Adrenal gland (tissue), 19 donors: ENCODE measurements at regions of chr7 and their contacts with region 1.

Region 1: DNA sequence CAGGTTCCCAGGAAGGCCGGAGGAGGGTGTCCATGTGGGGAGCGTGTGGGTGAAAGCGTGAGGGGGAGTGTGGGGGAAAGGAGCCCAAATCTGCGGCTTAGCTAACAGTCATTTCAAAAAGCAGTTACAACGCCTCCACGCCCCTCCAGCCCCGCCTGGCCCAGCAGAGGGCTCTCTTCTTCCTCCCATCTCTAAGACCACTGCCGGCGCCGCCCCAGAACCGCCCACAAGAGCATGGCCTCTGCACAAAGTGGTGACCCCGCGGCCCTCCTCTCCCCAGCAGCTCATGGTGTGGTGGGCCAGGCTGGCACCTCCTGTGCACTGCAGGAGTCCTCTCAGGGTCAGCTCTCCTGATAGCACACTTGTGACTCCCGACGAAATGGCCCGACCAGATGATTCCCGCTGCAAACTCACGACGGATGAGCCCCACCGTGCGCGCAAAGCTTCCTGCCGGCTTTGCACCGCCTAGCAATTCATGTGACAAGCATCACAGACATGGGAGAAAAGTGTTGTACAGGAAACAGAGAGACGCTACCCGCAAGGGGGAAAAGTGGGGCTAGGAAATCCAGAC is 12.4 kb upstream of the HUS1 start:
- DNase-seq: peak; percentile 78 to 91 (median 82)
- H3K4me3 ChIP-seq: peak overlapping the region in 2 of 4 donors; percentile 36 to 74
- H3K27ac ChIP-seq: peak overlapping the region in 2 of 5 donors; percentile 37 to 75
- H3K4me1 ChIP-seq: no peaks in the 10 kb centered on the region
- H3K27me3 ChIP-seq: no peaks in the 10 kb centered on the region
- CTCF ChIP-seq: peak; percentile 37 to 71 (median 58)
- POLR2A ChIP-seq: peak in 1 of 2 donors; percentile 16

Region 2: GRCh38 chr7:47924270-47924669 is 67.6 kb before region 1 on chr7:
- intact Hi-C with region 1: no loop called
- DNase-seq: no peak
- H3K4me3 ChIP-seq: no peak overlapping the region
- H3K27ac ChIP-seq: no peak overlapping the region
- H3K4me1 ChIP-seq: no peaks in the 10 kb centered on the region
- H3K27me3 ChIP-seq: no peaks in the 10 kb centered on the region
- CTCF ChIP-seq: no peak
- POLR2A ChIP-seq: no peak

Region 3: GRCh38 chr7:48089046-48090003 is 97.5 kb after region 1 on chr7 and contains the start of gene UPP1:
- intact Hi-C with region 1: loop called in 1 of 2 experiments (anchors 5 kb)
- DNase-seq: peak in 6 of 7 donors; percentile 52 to 96 (median 96)
- H3K4me3 ChIP-seq: peak within 1 kb of the TSS; percentile 49 to 90 (median 74)
- H3K27ac ChIP-seq: peak within 1 kb of the TSS; percentile 97 to 99 (median 98)
- H3K4me1 ChIP-seq: peaks cover 7 to 53% of the 10 kb centered on the region in 2 donors
- H3K27me3 ChIP-seq: no peaks in the 10 kb centered on the region
- CTCF ChIP-seq: peak in 2 of 6 experiments; percentile 2 to 8
- POLR2A ChIP-seq: peak; percentile 93 to 94
- total RNA-seq, gene UPP1: 6.9 to 47.1 (median 23.7) TPM

Region 4: DNA sequence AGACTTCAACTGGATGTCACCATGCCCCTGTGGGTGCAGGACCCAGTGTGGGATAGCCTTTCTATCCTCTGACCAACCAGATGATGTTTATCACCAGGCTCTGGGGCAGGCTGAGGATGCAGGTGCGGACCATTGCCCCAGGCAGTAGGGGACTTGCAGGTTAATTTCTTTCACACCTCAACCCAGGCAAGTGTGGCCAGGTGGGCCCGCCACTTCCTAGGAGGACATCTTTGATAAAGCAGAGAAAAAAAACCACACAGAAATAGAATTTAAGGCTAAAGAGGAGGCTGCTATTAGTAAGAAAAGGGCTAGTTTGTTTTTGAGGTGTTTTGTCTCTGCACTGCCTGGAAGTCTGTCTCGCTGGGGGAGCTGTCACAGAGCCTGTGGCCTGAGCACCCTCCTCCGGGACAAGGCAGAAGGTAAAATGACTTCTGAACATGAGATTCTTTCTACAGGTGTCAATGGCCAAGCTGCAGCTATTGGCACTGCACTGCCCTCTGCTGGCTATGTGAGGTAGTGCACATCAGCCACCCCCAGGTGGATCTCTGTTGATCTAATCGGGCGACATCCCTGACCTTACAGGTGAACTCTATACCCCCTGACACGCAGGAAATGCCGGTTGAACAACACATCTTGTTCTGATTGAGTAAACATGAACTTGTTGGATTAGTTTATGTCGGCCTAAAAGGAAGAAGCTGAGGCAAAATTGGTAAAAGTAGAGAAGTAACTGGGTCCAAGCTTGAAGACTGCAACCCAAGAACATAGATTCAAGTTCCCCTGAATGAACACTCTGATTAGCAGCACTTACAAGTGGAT is 118.2 kb after region 1 on chr7:
- intact Hi-C with region 1: loop called (anchors 2 to 5 kb)
- DNase-seq: peak; percentile 61 to 93 (median 80)
- H3K4me3 ChIP-seq: no peak overlapping the region
- H3K27ac ChIP-seq: no peak overlapping the region
- H3K4me1 ChIP-seq: peaks cover 6 to 7% of the 10 kb centered on the region in 2 donors
- H3K27me3 ChIP-seq: no peaks in the 10 kb centered on the region
- CTCF ChIP-seq: peak; percentile 94 to 99 (median 98)
- POLR2A ChIP-seq: no peak

Region 5: DNA sequence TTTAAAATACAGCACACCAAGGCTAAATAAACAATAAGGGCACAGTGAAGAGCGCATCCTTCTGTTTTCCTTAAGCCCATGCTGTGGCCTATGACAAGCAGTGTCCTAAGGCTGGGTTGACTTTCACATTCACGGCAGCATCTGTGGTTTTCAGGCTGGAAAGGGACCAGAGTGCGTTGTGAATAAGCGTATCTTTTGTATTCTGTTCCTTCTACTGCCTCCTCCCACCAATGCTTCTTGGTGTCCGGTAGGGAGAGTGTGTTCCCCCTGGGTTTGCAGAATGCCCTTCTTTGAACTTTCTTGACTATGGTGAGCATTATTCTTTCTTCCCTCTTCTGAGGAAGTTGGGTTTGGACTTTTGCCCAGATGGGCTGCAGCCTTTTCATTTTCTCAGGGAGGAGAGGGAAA is 253.0 kb after region 1 on chr7:
- intact Hi-C with region 1: no loop called
- DNase-seq: peak in 5 of 7 donors; percentile 20 to 58 (median 30)
- H3K4me3 ChIP-seq: no peak overlapping the region
- H3K27ac ChIP-seq: peak overlapping the region in 1 of 5 donors; percentile 10
- H3K4me1 ChIP-seq: peaks cover 0 to 7% of the 10 kb centered on the region in 2 donors
- H3K27me3 ChIP-seq: no peaks in the 10 kb centered on the region
- CTCF ChIP-seq: no peak
- POLR2A ChIP-seq: no peak

Region 6: GRCh38 chr7:48280100-48280499 is 288.3 kb after region 1 on chr7:
- intact Hi-C with region 1: no loop called
- DNase-seq: no peak
- H3K4me3 ChIP-seq: no peak overlapping the region
- H3K27ac ChIP-seq: no peak overlapping the region
- H3K4me1 ChIP-seq: no peaks in the 10 kb centered on the region
- H3K27me3 ChIP-seq: no peaks in the 10 kb centered on the region
- CTCF ChIP-seq: no peak
- POLR2A ChIP-seq: no peak